CD4-positive, alpha-beta T cell (primary cell): ENCODE measurements at regions of chr18 and their contacts with region 1.

Region 1: GRCh38 chr18:21074336-21075323 is 37.0 kb downstream of the ROCK1 start:
- DNase-seq: peak in 1 of 14 experiments; percentile 19
- ATAC-seq: peak; percentile 52
- H3K4me3 ChIP-seq: no peak overlapping the region
- H3K4me3 Mint-ChIP-seq: peak overlapping the region; percentile 66
- H3K27ac ChIP-seq: no peak overlapping the region
- H3K27ac Mint-ChIP-seq: peak overlapping the region; percentile 62
- H3K4me1 ChIP-seq: peaks cover 42% of the 10 kb centered on the region
- H3K4me1 Mint-ChIP-seq: peaks cover 78% of the 10 kb centered on the region
- H3K27me3 ChIP-seq: no peaks in the 10 kb centered on the region
- H3K27me3 Mint-ChIP-seq: no peaks in the 10 kb centered on the region
- CTCF ChIP-seq: no peak

Region 2: DNA sequence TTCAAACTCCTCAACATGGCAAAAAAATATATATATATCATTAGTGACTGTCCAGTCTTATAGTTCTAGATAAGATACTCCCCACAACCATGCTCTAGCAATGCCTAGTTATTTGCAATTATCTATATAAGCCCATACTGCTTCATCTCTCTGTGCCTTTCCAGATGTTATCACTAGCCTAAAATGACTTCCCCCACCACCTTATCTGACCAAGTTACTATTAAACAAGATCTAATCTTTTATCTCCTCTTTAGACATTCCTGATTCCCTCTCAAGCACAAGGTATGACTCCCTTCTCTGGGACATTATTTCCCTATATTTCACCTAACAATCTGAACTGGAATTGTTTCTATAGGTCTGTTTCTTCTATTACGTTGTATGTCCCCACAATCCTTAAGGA is 15.6 kb before region 1 on chr18:
- CTCF ChIA-PET with region 1: interaction called, 5 read pairs
- POLR2A ChIA-PET with region 1: no interaction called
- intact Hi-C with region 1: loop called in 1 of 2 experiments (anchors 2 kb)
- DNase-seq: no peak
- ATAC-seq: no peak
- H3K4me3 ChIP-seq: no peak overlapping the region
- H3K4me3 Mint-ChIP-seq: no peak overlapping the region
- H3K27ac ChIP-seq: no peak overlapping the region
- H3K27ac Mint-ChIP-seq: no peak overlapping the region
- H3K4me1 ChIP-seq: no peaks in the 10 kb centered on the region
- H3K4me1 Mint-ChIP-seq: peaks cover 43% of the 10 kb centered on the region
- H3K27me3 ChIP-seq: no peaks in the 10 kb centered on the region
- H3K27me3 Mint-ChIP-seq: no peaks in the 10 kb centered on the region
- CTCF ChIP-seq: no peak

Region 3: GRCh38 chr18:21242141-21242779 is 167.6 kb after region 1 on chr18 and contains the start of gene GREB1L:
- CTCF ChIA-PET with region 1: no interaction called
- POLR2A ChIA-PET with region 1: no interaction called
- intact Hi-C with region 1: no loop called
- DNase-seq: no peak
- ATAC-seq: no peak
- H3K4me3 ChIP-seq: no peak within 1 kb of the TSS
- H3K4me3 Mint-ChIP-seq: no peak within 1 kb of the TSS
- H3K27ac ChIP-seq: no peak within 1 kb of the TSS
- H3K27ac Mint-ChIP-seq: no peak within 1 kb of the TSS
- H3K4me1 ChIP-seq: peaks cover 7% of the 10 kb centered on the region
- H3K4me1 Mint-ChIP-seq: peaks cover 9% of the 10 kb centered on the region
- H3K27me3 ChIP-seq: peaks cover 43 to 63% of the 10 kb centered on the region in 2 experiments
- H3K27me3 Mint-ChIP-seq: peaks cover 77% of the 10 kb centered on the region
- CTCF ChIP-seq: no peak
- total RNA-seq, gene GREB1L: not detected